Heart right ventricle (tissue), 16 donors: ENCODE measurements at regions of chr19 and their contacts with region 1.

Region 1: GRCh38 chr19:17429641-17430113 is 9.8 kb downstream of the MVB12A start:
- DNase-seq: no peak
- ATAC-seq: no peak
- H3K4me3 ChIP-seq: no peak overlapping the region
- H3K27ac ChIP-seq: no peak overlapping the region
- H3K4me1 ChIP-seq: peaks cover 0 to 5% (median 0%) of the 10 kb centered on the region in 9 donors
- H3K27me3 ChIP-seq: no peaks in the 10 kb centered on the region
- CTCF ChIP-seq: no peak

Region 2: DNA sequence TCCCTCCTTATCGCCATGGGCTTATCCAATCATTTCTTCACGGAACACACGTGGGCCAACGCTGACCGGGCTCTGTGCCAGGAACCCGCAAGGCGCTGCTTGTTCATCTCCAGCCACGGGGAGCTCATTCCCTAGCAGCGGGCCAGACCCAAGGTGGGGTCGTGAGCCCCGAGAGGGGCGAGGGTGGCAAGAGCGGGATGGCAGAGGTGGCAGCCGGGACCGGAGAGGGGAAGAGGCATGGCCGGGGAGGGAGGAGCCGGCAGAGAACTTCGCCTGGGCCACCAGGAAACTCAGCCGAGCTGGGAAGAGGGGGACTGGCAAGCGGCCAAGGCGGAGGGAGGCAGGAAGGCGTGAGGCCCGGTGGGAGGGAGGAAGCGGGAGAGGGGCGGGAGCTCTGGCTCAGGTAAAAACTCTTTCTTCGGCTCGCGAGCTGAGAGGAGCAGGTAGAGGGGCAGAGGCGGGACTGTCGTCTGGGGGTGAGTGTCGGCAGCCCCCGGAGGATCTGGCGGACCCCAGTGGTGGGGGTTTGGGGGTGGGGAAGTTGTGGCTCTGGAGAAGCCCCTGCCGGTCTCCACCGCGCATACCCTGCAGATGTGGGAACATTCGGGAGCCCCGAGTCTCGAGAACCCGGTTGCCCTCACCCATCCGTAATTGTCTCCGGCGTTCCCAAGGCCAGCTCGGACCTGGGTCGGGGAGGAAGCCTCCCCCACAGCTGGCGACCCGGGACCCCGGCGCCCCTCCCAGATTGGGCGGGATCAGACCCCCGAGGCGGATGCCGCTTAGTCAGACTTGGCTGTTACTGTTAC is 365.3 kb after region 1 on chr19 and contains the start of gene B3GNT3:
- intact Hi-C with region 1: loop called in 1 of 10 experiments (anchors 5 kb)
- DNase-seq: peak in 1 of 2 donors; percentile 34
- ATAC-seq: no peak
- H3K4me3 ChIP-seq: peak within 1 kb of the TSS in 1 of 10 donors; percentile 34
- H3K27ac ChIP-seq: no peak within 1 kb of the TSS
- H3K4me1 ChIP-seq: peaks cover 0 to 19% (median 0%) of the 10 kb centered on the region in 9 donors
- H3K27me3 ChIP-seq: peaks cover 0 to 83% (median 61%) of the 10 kb centered on the region in 7 donors
- CTCF ChIP-seq: no peak
- total RNA-seq, gene B3GNT3: not detected